Endothelial cell of umbilical vein (primary cell): ENCODE measurements at regions of chr6 and their contacts with region 1.

Region 1: DNA sequence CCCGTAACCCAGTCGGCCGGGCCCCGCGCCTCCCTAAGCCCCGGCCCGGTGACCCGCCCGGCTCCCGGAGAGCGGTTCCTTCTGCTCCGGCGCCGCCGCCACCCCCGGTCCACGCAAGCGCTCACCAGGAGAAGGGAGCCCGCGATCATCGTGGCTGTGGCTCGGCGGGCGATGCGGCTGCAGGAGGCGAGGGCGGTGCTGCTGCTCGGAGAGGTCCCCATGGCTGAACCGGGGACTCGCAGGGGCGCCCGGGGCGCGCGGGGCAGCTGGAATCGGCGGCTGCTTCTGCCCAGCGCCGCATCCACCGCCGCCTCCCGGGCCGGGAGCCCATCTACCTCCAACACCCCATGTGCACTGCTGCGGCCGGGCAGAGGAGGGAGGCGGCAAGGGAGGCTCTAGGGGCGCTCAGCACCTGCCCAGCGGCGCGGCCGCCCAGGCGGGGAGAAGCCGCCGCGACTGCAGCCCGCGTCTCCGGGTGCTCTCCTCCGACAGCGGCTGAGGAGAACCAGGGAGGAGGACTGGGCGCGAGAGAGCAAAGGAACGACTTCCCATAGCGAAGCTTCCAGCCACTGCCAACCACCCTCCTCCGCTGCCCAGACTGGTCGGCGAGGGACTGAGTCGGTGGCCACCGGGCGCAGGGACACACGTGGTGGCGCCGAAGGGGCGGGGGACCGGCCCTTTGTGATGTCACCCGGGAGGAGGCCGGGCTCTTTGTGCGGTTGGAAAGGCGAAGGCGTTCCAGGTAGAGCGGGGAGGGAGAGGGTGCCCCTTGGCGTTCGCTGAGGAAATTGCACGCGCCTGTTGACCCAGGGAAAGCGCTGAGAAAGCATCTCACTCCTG is at the start of gene TNFRSF21:
- DNase-seq: peak; percentile 95
- H3K4me3 ChIP-seq: peak within 1 kb of the TSS; percentile 49 to 86 (median 80)
- H3K27ac ChIP-seq: peak within 1 kb of the TSS; percentile 60
- H3K4me1 ChIP-seq: peaks cover 16% of the 10 kb centered on the region
- H3K27me3 ChIP-seq: no peaks in the 10 kb centered on the region
- CTCF ChIP-seq: peak; percentile 93 to 94
- POLR2A ChIP-seq: peak; percentile 82
- total RNA-seq, gene TNFRSF21: 40.6 and 52.3 TPM in 2 replicates

Region 2: DNA sequence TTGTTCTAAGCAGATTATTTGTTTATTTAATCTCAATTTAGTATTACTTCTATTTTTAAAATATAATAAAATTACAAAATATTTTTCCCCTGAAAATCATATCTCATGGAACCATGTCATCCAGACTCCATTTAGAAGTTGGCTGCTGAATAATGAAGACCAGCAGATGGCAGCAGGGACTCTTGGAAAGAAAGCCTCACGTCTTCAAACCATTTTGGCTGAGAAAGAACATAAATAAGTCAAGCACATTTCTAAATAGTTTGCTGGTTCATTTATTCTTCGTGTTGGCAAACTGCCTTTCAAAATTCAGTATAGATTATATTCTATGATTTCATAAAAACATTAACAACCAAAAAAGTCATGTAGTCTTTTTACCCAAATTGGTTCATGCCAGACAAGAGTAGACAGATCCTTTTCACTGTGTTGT is 889.9 kb before region 1 on chr6:
- CTCF ChIA-PET with region 1: interaction called, 5 read pairs
- POLR2A ChIA-PET with region 1: no interaction called
- dilution Hi-C with region 1: no loop called
- intact Hi-C with region 1: loop called (anchors 5 kb)
- DNase-seq: peak; percentile 63
- H3K4me3 ChIP-seq: no peak overlapping the region
- H3K27ac ChIP-seq: no peak overlapping the region
- H3K4me1 ChIP-seq: no peaks in the 10 kb centered on the region
- H3K27me3 ChIP-seq: peaks cover 4 to 12% of the 10 kb centered on the region in 2 experiments
- CTCF ChIP-seq: peak; percentile 46 to 63
- POLR2A ChIP-seq: no peak

Region 3: GRCh38 chr6:46949632-46950280 is 359.8 kb before region 1 on chr6:
- CTCF ChIA-PET with region 1: no interaction called
- POLR2A ChIA-PET with region 1: no interaction called
- dilution Hi-C with region 1: no loop called
- intact Hi-C with region 1: loop called (anchors 2 kb)
- DNase-seq: peak; percentile 50
- H3K4me3 ChIP-seq: no peak overlapping the region
- H3K27ac ChIP-seq: peak overlapping the region; percentile 98
- H3K4me1 ChIP-seq: peaks cover 44% of the 10 kb centered on the region
- H3K27me3 ChIP-seq: no peaks in the 10 kb centered on the region
- CTCF ChIP-seq: no peak
- POLR2A ChIP-seq: no peak

Region 4: DNA sequence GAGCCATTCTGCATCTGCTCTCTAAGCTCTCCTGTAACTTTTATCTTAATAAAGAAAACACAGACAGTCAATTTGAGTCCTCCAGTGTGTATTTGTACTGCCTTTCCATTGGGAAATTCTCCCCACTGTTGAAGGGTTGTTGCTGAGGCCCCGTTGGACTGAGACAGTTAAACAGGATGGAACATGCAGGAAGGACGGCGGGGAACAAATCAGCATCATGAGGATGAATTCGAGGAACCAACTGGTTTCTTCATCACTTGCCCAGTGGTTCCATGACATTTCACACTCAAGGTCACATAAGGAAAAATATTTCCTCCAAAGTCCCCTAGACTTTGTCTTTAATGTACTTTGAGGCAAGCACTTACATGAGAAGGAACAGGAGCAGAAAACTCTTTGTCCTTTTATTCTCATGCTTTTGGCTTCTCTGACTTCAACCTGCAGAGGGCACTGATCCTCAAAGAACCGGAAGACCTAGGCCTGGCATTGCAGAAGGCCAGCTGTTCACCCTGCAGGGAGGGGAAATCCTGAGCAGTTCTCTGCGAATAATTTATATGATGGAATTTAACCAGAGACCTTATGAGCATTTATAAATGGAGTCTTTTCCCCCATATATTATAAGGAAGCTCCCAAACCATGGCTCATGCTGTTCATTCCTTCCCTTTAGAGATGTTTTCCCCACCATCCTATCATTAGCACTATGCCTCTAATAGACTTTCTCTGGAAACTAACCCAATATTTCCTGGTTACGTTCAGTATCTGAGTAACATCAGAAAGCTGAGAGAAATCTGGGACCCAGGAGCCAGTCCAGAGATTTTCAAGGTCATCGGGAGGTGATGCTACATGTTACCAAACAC is 212.2 kb before region 1 on chr6:
- CTCF ChIA-PET with region 1: interaction called, 129 read pairs
- POLR2A ChIA-PET with region 1: no interaction called
- dilution Hi-C with region 1: no loop called
- intact Hi-C with region 1: loop called (anchors 1 kb)
- DNase-seq: peak; percentile 77
- H3K4me3 ChIP-seq: no peak overlapping the region
- H3K27ac ChIP-seq: no peak overlapping the region
- H3K4me1 ChIP-seq: peaks cover 8% of the 10 kb centered on the region
- H3K27me3 ChIP-seq: no peaks in the 10 kb centered on the region
- CTCF ChIP-seq: peak; percentile 58 to 62
- POLR2A ChIP-seq: no peak

Region 5: DNA sequence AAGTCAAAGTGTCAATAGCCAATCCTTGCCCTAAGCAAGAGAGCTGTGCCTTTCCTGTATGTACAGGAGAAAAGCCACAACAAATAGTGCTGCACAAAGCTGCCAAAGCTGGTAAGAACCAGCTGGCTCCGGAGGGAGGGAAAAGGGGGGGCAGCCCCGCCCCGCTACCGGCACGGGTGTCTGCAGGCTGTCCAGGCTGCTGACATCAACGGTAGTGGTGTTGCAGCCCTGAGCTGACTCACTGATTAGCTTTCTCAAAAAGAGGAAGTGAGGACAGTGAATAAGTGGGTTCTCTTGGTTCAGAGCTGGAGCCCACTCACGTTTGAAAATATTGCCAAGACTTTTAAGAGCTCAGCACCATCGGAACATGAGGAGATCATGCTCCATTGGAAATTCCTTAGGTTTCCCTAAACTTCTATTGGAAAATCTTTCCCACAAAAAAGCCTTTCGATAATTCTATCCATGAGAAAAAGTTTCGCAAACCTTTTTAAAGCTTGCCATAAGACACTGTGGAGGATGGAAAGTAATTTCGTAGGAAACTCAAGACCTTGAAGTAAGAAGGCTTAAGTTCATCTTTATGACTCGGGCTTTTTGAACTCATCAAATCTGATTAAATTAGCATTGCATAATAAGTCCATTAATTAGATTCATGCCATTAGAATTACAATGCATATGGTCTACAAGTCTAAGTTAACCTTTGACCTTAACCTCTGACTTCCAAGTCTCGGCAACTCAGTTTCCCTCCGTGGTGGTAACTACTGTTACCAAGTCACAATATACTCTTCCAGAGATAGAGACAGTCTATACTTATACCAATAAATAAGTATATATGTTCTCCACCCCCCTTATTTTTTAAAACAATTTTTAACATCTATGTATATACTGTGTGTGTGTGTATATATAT is 66.8 kb before region 1 on chr6:
- CTCF ChIA-PET with region 1: interaction called, 10 read pairs
- POLR2A ChIA-PET with region 1: no interaction called
- dilution Hi-C with region 1: no loop called
- intact Hi-C with region 1: loop called (anchors 1 kb)
- DNase-seq: peak; percentile 95
- H3K4me3 ChIP-seq: no peak overlapping the region
- H3K27ac ChIP-seq: peak overlapping the region; percentile 51
- H3K4me1 ChIP-seq: peaks cover 14% of the 10 kb centered on the region
- H3K27me3 ChIP-seq: no peaks in the 10 kb centered on the region
- CTCF ChIP-seq: no peak
- POLR2A ChIP-seq: no peak

Region 6: DNA sequence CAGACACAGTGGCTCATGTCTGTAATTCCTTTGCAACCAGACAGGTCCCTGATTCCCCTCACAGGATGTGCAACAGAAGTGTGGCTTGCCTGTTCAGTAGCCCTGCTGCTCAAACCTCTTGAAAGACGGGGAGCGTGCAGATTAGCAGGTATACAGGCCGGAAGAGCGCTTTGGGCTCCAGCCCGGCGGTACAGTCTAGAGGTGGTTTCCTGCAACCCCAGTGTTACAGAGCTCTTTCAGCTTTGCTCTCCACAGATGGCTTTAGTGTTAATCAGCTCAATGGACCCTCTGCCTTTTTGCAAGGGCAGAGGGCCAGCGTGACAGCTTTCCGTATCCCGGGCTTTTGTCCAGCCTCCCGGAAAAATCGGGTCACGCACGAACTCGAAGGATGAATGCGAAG is 67.4 kb after region 1 on chr6:
- CTCF ChIA-PET with region 1: no interaction called
- POLR2A ChIA-PET with region 1: no interaction called
- dilution Hi-C with region 1: no loop called
- intact Hi-C with region 1: no loop called
- DNase-seq: no peak
- H3K4me3 ChIP-seq: no peak overlapping the region
- H3K27ac ChIP-seq: no peak overlapping the region
- H3K4me1 ChIP-seq: no peaks in the 10 kb centered on the region
- H3K27me3 ChIP-seq: no peaks in the 10 kb centered on the region
- CTCF ChIP-seq: no peak
- POLR2A ChIP-seq: no peak

Region 7: GRCh38 chr6:47413752-47414422 is 104.4 kb after region 1 on chr6:
- CTCF ChIA-PET with region 1: no interaction called
- POLR2A ChIA-PET with region 1: no interaction called
- dilution Hi-C with region 1: no loop called
- intact Hi-C with region 1: no loop called
- DNase-seq: peak; percentile 84
- H3K4me3 ChIP-seq: peak overlapping the region in 2 of 3 experiments; percentile 22 to 73
- H3K27ac ChIP-seq: peak overlapping the region; percentile 40
- H3K4me1 ChIP-seq: peaks cover 4% of the 10 kb centered on the region
- H3K27me3 ChIP-seq: no peaks in the 10 kb centered on the region
- CTCF ChIP-seq: peak; percentile 66 to 74
- POLR2A ChIP-seq: no peak